Activated T-helper 1 cell treated with anti-CD3 and anti-CD28 coated beads, Interleukin-12 subunit alpha, Interleukin-12 subunit beta, Interleukin-2, Interleukin-4 antibody, amounts not matched to agents 30 ng/mL and 10 ng/mL and 1 ng/mL, durations not matched to agents 14 hours and 24 hours and 36 hours (primary cell): ENCODE measurements at regions of chr9 and their contacts with region 1.

Region 1: DNA sequence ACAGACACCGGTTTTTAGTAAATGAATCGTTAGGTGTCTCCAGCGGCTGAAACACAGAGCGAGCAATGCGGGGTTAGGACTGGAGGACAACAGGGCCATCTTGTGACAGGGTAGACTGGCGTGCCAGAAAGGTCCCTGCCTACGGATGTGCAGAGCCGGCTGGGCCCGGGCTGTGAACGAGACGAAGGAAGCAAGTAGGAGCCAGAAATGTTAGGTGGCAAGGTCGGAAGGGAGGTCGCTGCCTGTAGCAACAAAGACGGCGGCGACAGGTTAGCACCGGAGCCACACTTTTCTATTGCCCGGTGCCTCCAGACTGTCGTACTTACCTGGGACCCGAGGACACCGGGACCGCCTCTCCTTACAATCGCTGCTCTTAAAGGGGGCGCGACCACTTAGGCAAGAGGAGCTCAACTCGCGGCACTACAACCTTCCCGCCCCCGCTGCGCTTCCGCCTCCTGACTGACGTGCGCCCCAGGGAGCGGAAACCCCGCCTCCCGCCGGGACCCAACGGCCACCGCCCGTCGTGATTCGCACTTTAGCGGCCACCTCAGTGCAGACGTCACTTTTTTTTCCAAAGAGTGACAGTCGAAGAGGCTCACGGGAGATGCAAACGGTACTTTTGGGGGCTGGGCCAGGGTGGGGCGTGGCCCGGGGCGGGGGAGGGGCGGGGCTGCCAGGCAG is at the start of gene INIP:
- DNase-seq: peak; percentile 98
- H3K4me3 Mint-ChIP-seq: peak within 1 kb of the TSS; percentile 99
- H3K27ac Mint-ChIP-seq: peak within 1 kb of the TSS; percentile 100
- H3K4me1 Mint-ChIP-seq: peaks cover 35% of the 10 kb centered on the region
- H3K27me3 Mint-ChIP-seq: no peaks in the 10 kb centered on the region
- total RNA-seq, gene INIP: 38.3 and 46.4 TPM in 2 replicates

Region 2: DNA sequence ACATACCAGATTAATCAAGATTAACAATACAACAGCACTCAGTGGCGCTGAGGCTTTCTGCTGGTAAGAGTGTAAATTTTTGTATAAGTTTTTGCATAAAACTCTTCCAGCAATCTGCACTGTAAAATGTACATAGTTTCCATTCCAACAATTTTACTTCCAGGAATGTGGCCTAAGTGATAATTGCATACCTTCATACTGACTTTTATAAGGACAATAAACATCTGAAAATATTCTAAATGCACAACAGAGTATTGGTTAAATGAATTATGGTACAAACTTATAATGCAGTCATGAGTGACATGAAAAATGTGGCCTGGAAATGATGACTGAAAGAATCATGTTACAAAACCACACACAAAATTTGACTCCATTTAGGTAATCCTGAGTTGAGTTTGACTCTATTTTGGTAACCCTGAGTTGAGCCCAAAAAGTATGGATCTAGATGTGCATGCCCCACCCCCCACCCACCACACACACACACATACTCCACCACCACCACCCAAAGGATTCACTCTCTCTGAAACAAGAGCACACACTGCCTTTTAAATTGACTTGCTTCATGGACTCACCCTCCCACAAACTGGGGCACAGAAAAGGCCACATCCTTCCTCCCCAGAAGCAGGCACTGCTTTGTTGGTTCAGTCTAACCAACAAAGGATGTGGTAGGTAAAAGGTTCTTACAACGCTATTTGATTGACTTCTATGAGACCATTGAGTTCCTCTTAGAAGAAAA is 680.4 kb before region 1 on chr9:
- intact Hi-C with region 1: loop called (anchors 1 kb)
- DNase-seq: peak; percentile 74
- H3K4me3 Mint-ChIP-seq: peak overlapping the region; percentile 43
- H3K27ac Mint-ChIP-seq: peak overlapping the region; percentile 82
- H3K4me1 Mint-ChIP-seq: peaks cover 53% of the 10 kb centered on the region
- H3K27me3 Mint-ChIP-seq: peaks cover 16% of the 10 kb centered on the region

Region 3: GRCh38 chr9:112379177-112380101 is 338.4 kb before region 1 on chr9:
- intact Hi-C with region 1: loop called (anchors 1 kb)
- DNase-seq: peak; percentile 97
- H3K4me3 Mint-ChIP-seq: peak overlapping the region; percentile 98
- H3K27ac Mint-ChIP-seq: peak overlapping the region; percentile 99
- H3K4me1 Mint-ChIP-seq: peaks cover 52% of the 10 kb centered on the region
- H3K27me3 Mint-ChIP-seq: no peaks in the 10 kb centered on the region

Region 4: GRCh38 chr9:112486221-112487007 is 231.4 kb before region 1 on chr9 and contains the start of gene KIAA1958:
- intact Hi-C with region 1: loop called (anchors 1 kb)
- DNase-seq: peak; percentile 85
- H3K4me3 Mint-ChIP-seq: peak within 1 kb of the TSS; percentile 97
- H3K27ac Mint-ChIP-seq: peak within 1 kb of the TSS; percentile 96
- H3K4me1 Mint-ChIP-seq: peaks cover 36% of the 10 kb centered on the region
- H3K27me3 Mint-ChIP-seq: peaks cover 2% of the 10 kb centered on the region
- total RNA-seq, gene KIAA1958: 8.2 and 8.6 TPM in 2 replicates

Region 5: DNA sequence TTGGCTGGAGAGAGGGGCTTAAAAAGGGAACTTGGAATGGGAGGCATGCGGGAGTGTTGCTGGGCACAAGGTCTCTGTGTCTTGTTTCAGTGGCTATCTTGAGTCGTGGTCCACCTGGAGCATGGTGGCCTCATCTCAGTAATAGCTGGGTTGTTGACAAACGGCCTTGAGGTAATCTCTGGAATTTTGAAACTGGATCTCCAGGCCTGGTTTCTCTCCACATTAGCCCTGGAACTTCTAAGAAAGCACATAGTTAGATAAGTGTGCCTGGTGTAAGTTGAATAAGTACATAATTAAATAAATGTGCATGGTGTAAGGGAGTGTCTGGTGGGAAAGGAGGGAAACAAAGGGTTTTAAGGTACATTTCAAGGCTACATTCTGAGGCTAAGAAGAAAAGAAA is 62.1 kb before region 1 on chr9:
- intact Hi-C with region 1: no loop called
- DNase-seq: no peak
- H3K4me3 Mint-ChIP-seq: no peak overlapping the region
- H3K27ac Mint-ChIP-seq: no peak overlapping the region
- H3K4me1 Mint-ChIP-seq: no peaks in the 10 kb centered on the region
- H3K27me3 Mint-ChIP-seq: peaks cover 2% of the 10 kb centered on the region

Region 6: DNA sequence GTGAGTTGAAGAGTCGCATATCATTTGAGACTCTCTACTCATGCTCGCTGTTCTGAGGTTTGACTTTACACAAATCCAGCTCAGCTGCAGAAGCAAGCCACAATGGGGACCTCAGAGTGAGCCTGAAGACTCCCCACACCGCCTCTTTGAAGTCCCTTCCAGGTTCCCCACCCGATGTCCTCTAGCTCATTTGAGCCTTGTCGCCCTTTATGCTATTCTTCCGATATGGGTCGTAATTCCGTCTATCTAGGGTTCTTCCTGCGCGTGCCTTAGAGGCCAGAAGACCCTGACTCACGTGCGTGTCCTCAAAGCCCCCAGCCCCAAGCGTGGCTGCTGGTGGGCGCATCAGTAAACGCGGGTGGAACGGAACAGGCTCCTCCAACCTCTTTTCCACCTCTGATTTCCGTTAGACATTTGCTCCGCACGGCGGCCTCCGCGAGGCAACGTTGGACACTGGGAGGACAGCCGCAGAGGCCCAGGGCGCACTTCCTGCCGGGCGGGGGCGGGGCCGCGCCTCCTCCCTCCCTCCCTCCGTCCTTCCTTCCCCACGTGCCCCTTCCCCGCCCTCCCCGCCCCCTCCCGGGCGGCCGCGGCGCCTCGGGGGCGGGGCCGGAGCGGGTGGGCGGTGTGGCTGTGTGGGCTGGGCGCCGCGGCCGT is 32.4 kb after region 1 on chr9 and contains the start of gene SNX30:
- intact Hi-C with region 1: loop called (anchors 1 kb)
- DNase-seq: peak; percentile 78
- H3K4me3 Mint-ChIP-seq: peak within 1 kb of the TSS; percentile 86
- H3K27ac Mint-ChIP-seq: peak within 1 kb of the TSS; percentile 88
- H3K4me1 Mint-ChIP-seq: peaks cover 67% of the 10 kb centered on the region
- H3K27me3 Mint-ChIP-seq: peaks cover 5% of the 10 kb centered on the region
- total RNA-seq, gene SNX30: 1.9 and 2.1 TPM in 2 replicates

Region 7: DNA sequence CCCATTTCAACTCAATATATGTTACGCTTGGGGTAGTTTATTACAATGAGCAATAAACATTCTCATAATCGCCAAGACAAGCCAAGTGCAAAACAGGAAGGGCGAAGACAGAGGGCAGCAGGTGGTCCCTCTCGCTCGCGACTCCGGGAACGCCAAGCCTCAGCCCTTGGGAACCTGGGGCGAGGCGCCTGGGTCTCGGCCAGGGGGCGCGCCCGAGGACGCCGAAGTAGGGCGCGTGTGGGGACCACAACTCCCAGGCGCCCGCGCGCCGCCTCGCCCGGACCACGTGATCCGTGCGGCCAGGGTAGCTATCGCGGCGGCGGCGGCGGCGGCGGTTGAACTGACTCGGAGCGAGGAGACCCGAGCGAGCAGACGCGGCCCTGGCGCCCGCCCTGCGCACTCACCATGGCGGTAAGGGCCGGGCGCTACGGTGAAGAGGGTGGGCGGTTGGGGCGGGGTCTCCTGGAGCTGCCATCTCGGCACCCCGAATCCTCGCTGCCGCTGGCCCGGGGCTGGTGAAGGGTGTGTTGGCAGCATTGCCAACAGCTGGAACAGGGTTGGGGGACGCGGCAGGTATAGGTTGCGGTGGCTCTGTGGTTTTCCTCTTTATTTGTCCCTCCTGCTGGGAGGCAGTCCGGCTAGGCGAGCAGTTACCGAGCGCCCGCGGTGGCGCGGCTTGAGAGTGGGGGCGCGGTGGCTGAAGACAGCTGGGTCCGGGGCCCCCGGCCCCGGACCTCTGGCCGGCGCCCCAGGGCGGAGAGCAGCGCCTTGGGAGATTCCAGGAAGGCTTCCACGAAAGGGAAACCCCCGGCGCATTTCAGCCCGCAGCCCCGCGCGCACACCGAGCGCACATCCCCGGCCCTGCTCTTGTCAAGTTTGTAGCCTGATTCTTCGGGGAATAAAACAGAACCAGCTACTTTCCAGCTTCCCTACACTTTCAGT is 433.1 kb after region 1 on chr9 and contains the start of gene SLC31A2:
- intact Hi-C with region 1: loop called (anchors 2 kb)
- DNase-seq: peak; percentile 84
- H3K4me3 Mint-ChIP-seq: peak within 1 kb of the TSS; percentile 80
- H3K27ac Mint-ChIP-seq: peak within 1 kb of the TSS; percentile 44
- H3K4me1 Mint-ChIP-seq: peaks cover 34% of the 10 kb centered on the region
- H3K27me3 Mint-ChIP-seq: peaks cover 13% of the 10 kb centered on the region
- total RNA-seq, gene SLC31A2: 6.0 and 6.5 TPM in 2 replicates

Region 8: DNA sequence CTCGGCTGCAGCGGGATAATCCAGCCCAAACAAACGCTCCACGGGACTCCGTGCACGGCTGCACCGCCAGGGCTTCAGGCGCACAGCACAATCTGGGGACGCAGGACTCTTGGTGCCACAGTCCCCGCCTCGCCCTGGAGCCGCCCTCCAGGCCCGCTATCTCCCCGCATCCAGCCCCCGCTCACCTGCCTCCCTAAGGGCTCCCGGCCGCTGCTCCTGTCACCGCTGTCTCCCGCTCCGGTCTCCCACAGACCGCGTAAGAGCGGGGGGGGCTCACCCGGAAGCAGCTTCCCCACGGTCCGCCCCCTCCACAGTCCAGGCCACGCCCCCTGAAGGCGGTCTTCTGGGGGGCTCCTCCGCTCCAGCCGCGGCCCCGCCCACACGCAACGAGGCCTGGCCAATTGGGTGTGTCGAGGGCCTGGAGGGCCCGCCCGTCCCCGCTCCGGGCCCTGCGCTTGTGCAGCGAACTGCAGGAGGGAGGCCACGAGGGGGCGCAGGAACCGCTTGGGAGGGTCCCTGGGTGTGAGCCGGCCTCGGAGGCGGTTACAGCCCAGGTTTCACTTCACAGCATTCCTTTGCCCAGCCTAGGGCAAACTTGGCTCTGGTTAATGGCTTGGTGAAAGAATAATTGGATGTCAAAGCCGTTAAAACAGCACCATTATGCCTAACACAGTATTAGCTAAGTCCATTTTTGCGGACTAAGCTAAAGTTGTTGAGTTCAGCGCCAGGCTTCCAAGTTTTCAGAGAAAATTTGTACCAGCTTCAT is 683.4 kb after region 1 on chr9 and contains the start of gene ALAD:
- intact Hi-C with region 1: loop called (anchors 5 kb)
- DNase-seq: peak; percentile 99
- H3K4me3 Mint-ChIP-seq: peak within 1 kb of the TSS; percentile 89
- H3K27ac Mint-ChIP-seq: peak within 1 kb of the TSS; percentile 67
- H3K4me1 Mint-ChIP-seq: peaks cover 25% of the 10 kb centered on the region
- H3K27me3 Mint-ChIP-seq: no peaks in the 10 kb centered on the region
- total RNA-seq, gene ALAD: 23.0 and 23.7 TPM in 2 replicates